ENCODE measurements at regions of chrX and their contacts with region 1.

Region 1: DNA sequence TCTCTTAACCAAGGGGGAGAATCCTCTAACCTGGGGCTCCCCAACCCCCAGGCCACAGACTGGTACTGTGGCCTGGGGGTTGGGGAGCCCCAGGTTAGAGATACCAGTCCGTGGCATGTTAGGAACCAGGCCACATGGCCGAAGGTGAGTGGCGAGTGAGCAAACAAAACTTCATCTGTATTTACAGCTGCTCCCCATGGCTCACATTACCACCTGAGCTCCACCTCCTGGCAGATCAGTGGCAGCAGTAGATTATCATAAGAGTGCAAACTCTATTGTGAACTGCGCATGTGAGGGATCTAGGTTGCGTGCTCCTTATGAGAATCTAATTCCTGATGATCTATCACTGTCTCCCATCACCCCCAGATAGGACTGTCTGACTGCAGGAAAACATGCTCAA is 957.2 kb upstream of the PRKX start:
- DNase-seq: peak; percentile 32
- H3K4me3 Mint-ChIP-seq: no peak overlapping the region
- H3K27ac Mint-ChIP-seq: no peak overlapping the region
- H3K4me1 Mint-ChIP-seq: peaks cover 17% of the 10 kb centered on the region
- H3K27me3 Mint-ChIP-seq: no peaks in the 10 kb centered on the region
- CTCF ChIP-seq: no peak

Region 2: DNA sequence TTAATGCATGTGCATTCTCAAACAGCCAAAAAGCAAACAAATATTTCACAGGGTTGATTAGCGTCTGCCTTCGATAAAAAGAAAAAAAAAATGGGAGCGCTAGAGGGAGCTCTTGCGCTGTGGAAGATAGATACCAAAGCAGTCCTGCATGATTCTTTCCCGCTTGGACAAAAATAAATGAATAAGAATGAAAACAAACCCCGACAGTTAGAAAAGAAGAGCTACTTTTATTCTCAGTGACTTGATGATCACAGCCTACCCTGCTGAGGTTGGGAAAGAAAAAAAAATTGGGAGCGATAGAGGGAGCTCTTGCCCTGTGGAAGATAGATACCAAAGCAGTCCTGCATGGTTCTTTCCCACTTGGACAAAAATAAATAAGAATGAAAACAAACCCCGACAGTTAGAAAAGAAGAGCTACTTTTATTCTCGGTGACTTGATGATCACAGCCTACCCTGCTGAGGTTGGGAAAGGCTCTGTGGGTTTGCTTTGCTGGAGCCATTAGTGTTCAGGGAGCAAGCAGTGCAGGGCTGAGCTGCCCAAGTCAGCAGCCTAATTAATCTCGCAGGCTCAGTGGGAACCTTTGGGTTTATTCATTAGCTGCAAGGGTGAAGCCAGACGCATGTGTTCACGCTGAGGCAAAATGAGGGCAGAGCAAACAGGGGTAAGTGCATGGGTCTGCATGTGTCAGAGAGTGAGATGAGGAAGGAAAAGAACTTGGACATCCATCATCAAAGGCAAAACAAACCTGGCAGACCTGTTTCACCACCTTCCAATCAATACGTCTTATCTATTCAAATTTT is 707.9 kb before region 1 on chrX:
- CTCF ChIA-PET with region 1: interaction called, 3 read pairs
- intact Hi-C with region 1: loop called (anchors 5 kb)
- DNase-seq: peak; percentile 65
- H3K4me3 Mint-ChIP-seq: peak overlapping the region; percentile 59
- H3K27ac Mint-ChIP-seq: peak overlapping the region; percentile 58
- H3K4me1 Mint-ChIP-seq: peaks cover 24% of the 10 kb centered on the region
- H3K27me3 Mint-ChIP-seq: no peaks in the 10 kb centered on the region
- CTCF ChIP-seq: peak; percentile 37

Region 3: GRCh38 chrX:4642104-4642503 is 28.5 kb before region 1 on chrX:
- CTCF ChIA-PET with region 1: no interaction called
- intact Hi-C with region 1: loop called (anchors 1 kb)
- DNase-seq: peak; percentile 14
- H3K4me3 Mint-ChIP-seq: no peak overlapping the region
- H3K27ac Mint-ChIP-seq: no peak overlapping the region
- H3K4me1 Mint-ChIP-seq: no peaks in the 10 kb centered on the region
- H3K27me3 Mint-ChIP-seq: no peaks in the 10 kb centered on the region
- CTCF ChIP-seq: no peak

Region 4: DNA sequence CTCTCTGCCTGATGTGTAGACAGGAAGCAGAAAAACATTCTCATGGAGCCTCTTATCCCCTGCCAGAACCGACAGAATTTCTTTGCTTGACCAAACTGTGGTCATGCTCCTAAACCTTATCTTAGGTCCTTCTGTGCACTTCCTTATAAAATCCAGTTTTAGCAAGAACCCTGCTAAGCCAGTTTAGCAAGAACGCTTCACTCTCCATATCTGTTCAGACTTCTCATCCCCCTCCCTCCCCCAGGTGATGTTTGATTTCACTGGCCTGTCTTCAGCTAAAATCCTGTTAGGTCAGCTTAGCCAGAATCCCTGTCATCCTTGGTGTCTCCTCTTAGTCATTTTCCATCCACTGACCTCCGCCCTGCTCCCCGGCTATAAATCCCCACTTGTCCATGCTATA is 173.8 kb after region 1 on chrX:
- CTCF ChIA-PET with region 1: no interaction called
- intact Hi-C with region 1: loop called (anchors 5 kb)
- DNase-seq: peak; percentile 52
- H3K4me3 Mint-ChIP-seq: no peak overlapping the region
- H3K27ac Mint-ChIP-seq: peak overlapping the region; percentile 37
- H3K4me1 Mint-ChIP-seq: peaks cover 12% of the 10 kb centered on the region
- H3K27me3 Mint-ChIP-seq: no peaks in the 10 kb centered on the region
- CTCF ChIP-seq: no peak

Region 5: GRCh38 chrX:5113128-5113527 is 442.5 kb after region 1 on chrX:
- CTCF ChIA-PET with region 1: no interaction called
- intact Hi-C with region 1: loop called (anchors 10 kb)
- DNase-seq: peak; percentile 1
- H3K4me3 Mint-ChIP-seq: no peak overlapping the region
- H3K27ac Mint-ChIP-seq: no peak overlapping the region
- H3K4me1 Mint-ChIP-seq: no peaks in the 10 kb centered on the region
- H3K27me3 Mint-ChIP-seq: no peaks in the 10 kb centered on the region
- CTCF ChIP-seq: no peak

Measured in Calu3 (cell line).